IMR-90 (cell line): ENCODE measurements at regions of chr1 and their contacts with region 1.

Region 1: DNA sequence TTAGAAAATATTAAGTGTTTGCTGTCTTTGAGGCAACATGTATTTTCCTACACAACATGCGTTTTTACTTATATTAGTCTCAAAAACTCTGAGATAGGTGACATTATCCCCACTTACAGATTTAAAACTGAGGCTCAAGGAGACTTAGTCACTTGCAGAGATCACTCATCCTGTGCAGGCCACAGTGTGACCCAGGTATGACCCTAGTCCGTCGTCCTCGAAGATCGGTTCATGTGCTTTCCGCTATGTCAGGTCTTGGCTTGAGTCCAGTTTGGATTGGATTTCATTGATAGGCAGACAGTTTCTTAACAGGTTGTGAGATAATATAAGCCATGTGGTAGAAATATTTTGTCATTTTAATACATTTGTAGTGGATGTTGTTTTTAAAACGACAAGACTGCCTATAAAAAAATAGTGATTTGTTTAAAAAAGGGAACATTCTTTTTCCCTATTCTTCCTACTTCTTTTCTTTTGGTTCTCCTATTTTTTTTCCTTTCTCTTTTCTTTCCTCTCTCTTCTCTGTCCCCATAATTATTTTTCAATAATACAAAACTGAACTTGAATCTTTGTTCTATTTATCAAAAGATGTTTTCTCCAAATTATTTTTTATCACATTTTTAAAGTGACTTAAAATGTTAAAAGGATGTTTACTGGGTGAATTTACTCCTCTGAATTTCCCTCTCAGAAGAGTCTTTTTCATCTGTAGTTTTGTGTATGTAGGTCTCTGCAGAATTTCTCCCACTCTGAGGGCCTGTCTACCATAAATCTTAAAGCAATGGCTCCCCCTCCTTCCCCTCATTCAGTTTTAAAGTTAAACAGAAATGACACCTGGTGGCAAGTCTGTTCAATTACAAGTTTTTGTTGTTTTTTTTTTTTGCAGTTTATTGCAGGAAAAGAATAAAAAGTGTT is 81.8 kb downstream of the PHTF1 start:
- DNase-seq: peak; percentile 63
- ATAC-seq: peak; percentile 50
- H3K4me3 ChIP-seq: no peak overlapping the region
- H3K27ac ChIP-seq: no peak overlapping the region
- H3K4me1 ChIP-seq: peaks cover 2% of the 10 kb centered on the region; the same call in 1 of the 2 replicates
- H3K27me3 ChIP-seq: no peaks in the 10 kb centered on the region
- CTCF ChIP-seq: peak; percentile 68
- POLR2A ChIP-seq: no peak
- RAD21 ChIP-seq: peak; percentile 68

Region 2: GRCh38 chr1:112706908-112707663 is 970.4 kb before region 1 on chr1 and contains the start of gene RHOC:
- CTCF ChIA-PET with region 1: no interaction called
- POLR2A ChIA-PET with region 1: no interaction called
- dilution Hi-C with region 1: no loop called
- in situ Hi-C with region 1: loop called (anchors 25 kb)
- intact Hi-C with region 1: no loop called
- DNase-seq: peak; percentile 85
- ATAC-seq: peak; percentile 81
- H3K4me3 ChIP-seq: peak within 1 kb of the TSS; percentile 84
- H3K27ac ChIP-seq: peak within 1 kb of the TSS; percentile 81
- H3K4me1 ChIP-seq: peaks cover 13% of the 10 kb centered on the region
- H3K27me3 ChIP-seq: no peaks in the 10 kb centered on the region; the same call in 1 of the 2 replicates
- CTCF ChIP-seq: peak; percentile 93
- POLR2A ChIP-seq: peak; percentile 74
- RAD21 ChIP-seq: peak; percentile 85
- total RNA-seq, gene RHOC: 699 and 764 TPM in 2 replicates

Region 3: GRCh38 chr1:113123737-113124136 is 553.8 kb before region 1 on chr1:
- CTCF ChIA-PET with region 1: interaction called, 3 read pairs
- POLR2A ChIA-PET with region 1: no interaction called
- dilution Hi-C with region 1: no loop called
- in situ Hi-C with region 1: no loop called
- intact Hi-C with region 1: loop called (anchors 5 kb)
- DNase-seq: peak; percentile 85
- ATAC-seq: peak; percentile 96
- H3K4me3 ChIP-seq: no peak overlapping the region
- H3K27ac ChIP-seq: no peak overlapping the region
- H3K4me1 ChIP-seq: peaks cover 3% of the 10 kb centered on the region; the same call in 1 of the 2 replicates
- H3K27me3 ChIP-seq: no peaks in the 10 kb centered on the region
- CTCF ChIP-seq: no peak
- POLR2A ChIP-seq: no peak
- RAD21 ChIP-seq: no peak

Region 4: DNA sequence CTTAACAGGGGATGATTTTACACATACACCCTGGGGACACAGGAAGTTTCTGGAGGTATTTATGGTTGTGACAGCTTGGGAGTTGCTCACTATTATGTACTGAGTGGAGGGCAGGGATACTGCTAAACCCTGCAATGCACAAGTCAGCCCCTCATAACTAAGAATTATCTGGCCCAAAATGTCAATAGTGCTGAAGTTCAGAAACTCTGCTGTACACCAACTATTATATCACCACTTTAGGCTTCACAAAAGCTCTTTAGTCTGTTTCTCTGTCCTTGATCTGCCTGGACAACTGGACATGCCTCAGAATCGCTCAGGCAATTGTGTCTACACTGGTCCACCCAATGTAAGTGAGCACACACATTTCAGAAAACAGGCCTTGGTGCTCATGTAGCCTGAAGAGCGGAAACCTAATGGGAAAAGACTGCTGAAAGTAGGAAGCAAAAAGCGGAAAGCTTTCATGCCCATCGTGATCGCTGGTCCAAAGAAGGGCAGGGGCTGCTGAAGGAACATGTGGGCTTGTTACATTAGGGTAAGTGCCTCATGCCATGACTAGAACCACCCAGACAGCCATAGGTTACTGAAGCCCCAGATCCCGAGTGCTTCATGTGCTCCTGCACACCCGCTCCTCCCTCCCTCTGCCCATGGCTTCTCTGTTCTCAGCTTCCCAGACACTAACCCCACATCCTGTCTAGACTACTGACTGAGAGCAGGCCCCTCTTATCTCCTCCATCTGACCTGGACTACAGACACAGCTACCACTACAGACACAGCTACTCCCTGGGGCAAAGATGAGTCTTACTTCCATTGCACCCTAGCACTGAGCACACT is 531.0 kb before region 1 on chr1:
- CTCF ChIA-PET with region 1: no interaction called
- POLR2A ChIA-PET with region 1: no interaction called
- dilution Hi-C with region 1: no loop called
- in situ Hi-C with region 1: loop called (anchors 5 kb)
- intact Hi-C with region 1: no loop called
- DNase-seq: peak; percentile 11
- ATAC-seq: no peak
- H3K4me3 ChIP-seq: no peak overlapping the region
- H3K27ac ChIP-seq: no peak overlapping the region
- H3K4me1 ChIP-seq: peaks cover 2% of the 10 kb centered on the region
- H3K27me3 ChIP-seq: no peaks in the 10 kb centered on the region
- CTCF ChIP-seq: no peak
- POLR2A ChIP-seq: no peak
- RAD21 ChIP-seq: no peak

Region 5: DNA sequence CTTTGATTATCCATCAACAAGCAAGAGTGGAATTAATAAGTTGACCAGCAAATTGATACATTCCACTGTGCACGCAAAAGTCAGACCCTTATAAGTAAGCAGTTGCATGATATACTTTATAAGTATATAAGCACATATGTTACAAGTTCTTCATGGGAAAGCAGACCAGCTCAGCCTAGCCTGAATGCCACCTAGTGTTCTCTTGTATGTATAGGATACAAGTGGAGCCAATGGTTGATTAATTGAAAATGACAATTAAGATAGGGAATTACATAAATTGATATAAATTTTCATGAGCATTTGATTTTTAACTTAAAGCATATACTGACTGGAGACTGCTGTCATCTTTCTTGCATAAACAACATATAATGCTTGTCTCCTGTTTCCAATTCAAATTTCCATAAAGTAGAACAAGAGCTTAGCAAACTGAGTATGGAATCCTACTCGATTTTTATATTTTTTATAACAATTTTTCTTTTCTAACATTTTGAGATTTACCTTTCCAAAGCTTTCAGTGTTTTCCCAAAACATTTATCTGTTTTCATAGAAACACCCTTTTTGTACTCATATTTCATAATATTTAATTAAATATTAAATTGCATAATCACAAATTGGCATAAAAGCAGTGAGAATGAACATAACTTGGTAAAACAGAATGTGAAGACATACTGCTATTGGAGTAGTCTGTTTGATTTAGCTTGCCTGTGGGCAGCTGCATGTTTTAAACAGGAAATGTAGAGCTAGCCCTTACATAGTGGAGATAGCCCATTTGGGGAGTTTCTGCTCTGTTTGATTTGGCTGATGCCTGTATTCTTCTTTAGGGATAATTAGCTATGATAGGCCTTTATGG is 224.4 kb before region 1 on chr1:
- CTCF ChIA-PET with region 1: interaction called, 3 read pairs
- POLR2A ChIA-PET with region 1: no interaction called
- dilution Hi-C with region 1: no loop called
- in situ Hi-C with region 1: no loop called
- intact Hi-C with region 1: loop called (anchors 10 kb)
- DNase-seq: peak; percentile 66
- ATAC-seq: peak; percentile 60
- H3K4me3 ChIP-seq: no peak overlapping the region
- H3K27ac ChIP-seq: no peak overlapping the region
- H3K4me1 ChIP-seq: peaks cover 2% of the 10 kb centered on the region
- H3K27me3 ChIP-seq: no peaks in the 10 kb centered on the region
- CTCF ChIP-seq: peak; percentile 55
- POLR2A ChIP-seq: no peak
- RAD21 ChIP-seq: peak; percentile 55